Activated CD8-positive, alpha-beta T cell treated with anti-CD3 and anti-CD28 coated beads for 36 hours (primary cell): ENCODE measurements at regions of chr11 and their contacts with region 1.

Region 1: DNA sequence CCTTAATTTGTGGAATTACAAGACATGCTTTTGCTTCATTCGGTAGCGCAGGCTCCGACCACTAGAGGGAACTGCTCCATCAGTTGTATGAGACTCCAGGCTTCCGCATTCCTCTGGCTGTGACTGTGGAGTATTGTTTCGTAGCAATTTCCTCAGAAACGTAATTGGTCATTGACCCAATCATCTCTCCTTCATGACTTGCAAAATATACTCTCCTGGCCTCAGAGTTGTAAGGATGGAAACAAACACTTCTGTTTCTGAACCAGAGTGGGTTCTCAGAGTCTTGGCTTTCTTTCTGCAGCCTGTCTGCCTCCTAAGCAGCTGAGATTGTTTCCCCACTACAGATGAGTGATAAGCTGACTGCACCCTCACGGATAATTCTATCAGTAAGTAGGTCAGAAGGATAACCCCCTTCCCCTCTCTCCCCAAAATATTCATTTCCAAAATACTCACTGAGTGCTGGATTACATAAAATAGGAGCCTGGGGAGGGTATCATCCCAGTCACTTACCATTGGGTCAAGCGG is 146.8 kb upstream of the ZC3H12C start:
- DNase-seq: peak; percentile 85
- ATAC-seq: peak; percentile 94
- H3K4me3 Mint-ChIP-seq: peak overlapping the region; percentile 10
- H3K27ac Mint-ChIP-seq: no peak overlapping the region
- H3K4me1 Mint-ChIP-seq: peaks cover 2% of the 10 kb centered on the region
- H3K27me3 Mint-ChIP-seq: no peaks in the 10 kb centered on the region
- CTCF ChIP-seq: peak; percentile 82

Region 2: GRCh38 chr11:109853156-109853776 is 93.1 kb before region 1 on chr11:
- CTCF ChIA-PET with region 1: no interaction called
- POLR2A ChIA-PET with region 1: no interaction called
- intact Hi-C with region 1: no loop called
- DNase-seq: peak; percentile 4
- ATAC-seq: peak; percentile 55
- H3K4me3 Mint-ChIP-seq: no peak overlapping the region
- H3K27ac Mint-ChIP-seq: no peak overlapping the region
- H3K4me1 Mint-ChIP-seq: no peaks in the 10 kb centered on the region
- H3K27me3 Mint-ChIP-seq: no peaks in the 10 kb centered on the region
- CTCF ChIP-seq: peak; percentile 47

Region 3: GRCh38 chr11:110376711-110377324 is 430.4 kb after region 1 on chr11:
- CTCF ChIA-PET with region 1: interaction called, 4 read pairs
- POLR2A ChIA-PET with region 1: no interaction called
- intact Hi-C with region 1: loop called (anchors 5 kb)
- DNase-seq: peak; percentile 38
- ATAC-seq: peak; percentile 29
- H3K4me3 Mint-ChIP-seq: no peak overlapping the region
- H3K27ac Mint-ChIP-seq: no peak overlapping the region
- H3K4me1 Mint-ChIP-seq: peaks cover 16% of the 10 kb centered on the region
- H3K27me3 Mint-ChIP-seq: peaks cover 7% of the 10 kb centered on the region
- CTCF ChIP-seq: peak; percentile 90